Activated CD4-positive, alpha-beta memory T cell treated with anti-CD3 and anti-CD28 coated beads for 36 hours (primary cell): ENCODE measurements at regions of chr9 and their contacts with region 1.

Region 1: DNA sequence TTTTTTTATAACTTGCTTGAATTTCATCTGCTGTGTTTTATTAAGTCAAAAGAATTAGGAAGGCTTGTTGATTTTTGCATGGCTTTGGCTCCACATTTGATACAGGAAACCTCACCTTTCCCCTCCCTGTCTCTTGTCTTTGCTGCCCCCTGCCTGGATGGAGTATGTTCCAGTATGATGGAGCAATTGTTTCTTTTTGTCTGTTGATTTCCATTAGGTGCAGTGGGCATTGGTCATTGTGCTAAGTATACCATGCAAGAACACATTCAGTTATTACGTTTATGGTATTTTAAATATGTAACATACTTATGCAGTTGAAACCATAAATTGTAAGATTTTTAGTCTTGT is 19.6 kb downstream of the TJP2 start:
- DNase-seq: no peak
- H3K4me3 Mint-ChIP-seq: no peak overlapping the region
- H3K27ac Mint-ChIP-seq: no peak overlapping the region
- H3K4me1 Mint-ChIP-seq: peaks cover 8% of the 10 kb centered on the region
- H3K27me3 Mint-ChIP-seq: no peaks in the 10 kb centered on the region

Region 2: DNA sequence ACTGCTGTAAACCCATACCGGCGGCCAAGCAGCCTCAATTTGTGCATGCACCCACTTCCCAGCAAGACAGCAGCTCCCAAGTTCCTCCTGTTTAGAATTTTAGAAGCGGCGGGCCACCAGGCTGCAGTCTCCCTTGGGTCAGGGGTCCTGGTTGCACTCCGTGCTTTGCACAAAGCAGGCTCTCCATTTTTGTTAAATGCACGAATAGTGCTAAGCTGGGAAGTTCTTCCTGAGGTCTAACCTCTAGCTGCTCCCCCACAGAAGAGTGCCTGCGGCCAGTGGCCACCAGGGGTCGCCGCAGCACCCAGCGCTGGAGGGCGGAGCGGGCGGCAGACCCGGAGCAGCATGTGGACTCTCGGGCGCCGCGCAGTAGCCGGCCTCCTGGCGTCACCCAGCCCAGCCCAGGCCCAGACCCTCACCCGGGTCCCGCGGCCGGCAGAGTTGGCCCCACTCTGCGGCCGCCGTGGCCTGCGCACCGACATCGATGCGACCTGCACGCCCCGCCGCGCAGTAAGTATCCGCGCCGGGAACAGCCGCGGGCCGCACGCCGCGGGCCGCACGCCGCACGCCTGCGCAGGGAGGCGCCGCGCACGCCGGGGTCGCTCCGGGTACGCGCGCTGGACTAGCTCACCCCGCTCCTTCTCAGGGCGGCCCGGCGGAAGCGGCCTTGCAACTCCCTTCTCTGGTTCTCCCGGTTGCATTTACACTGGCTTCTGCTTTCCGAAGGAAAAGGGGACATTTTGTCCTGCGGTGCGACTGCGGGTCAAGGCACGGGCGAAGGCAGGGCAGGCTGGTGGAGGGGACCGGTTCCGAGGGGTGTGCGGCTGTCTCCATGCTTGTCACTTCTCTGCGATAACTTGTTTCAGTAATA is 158.0 kb before region 1 on chr9 and contains the start of gene FXN:
- CTCF ChIA-PET with region 1: interaction called, 37 read pairs
- POLR2A ChIA-PET with region 1: no interaction called
- intact Hi-C with region 1: loop called (anchors 1 kb)
- DNase-seq: peak; percentile 89
- H3K4me3 Mint-ChIP-seq: peak within 1 kb of the TSS; percentile 97
- H3K27ac Mint-ChIP-seq: peak within 1 kb of the TSS; percentile 92
- H3K4me1 Mint-ChIP-seq: peaks cover 21% of the 10 kb centered on the region
- H3K27me3 Mint-ChIP-seq: no peaks in the 10 kb centered on the region
- total RNA-seq, gene FXN: 14.1 to 15.2 TPM

Region 3: GRCh38 chr9:69056191-69056815 is 137.4 kb before region 1 on chr9:
- CTCF ChIA-PET with region 1: interaction called, 179 read pairs
- POLR2A ChIA-PET with region 1: interaction called, 3 read pairs
- intact Hi-C with region 1: loop called (anchors 1 kb)
- DNase-seq: no peak
- H3K4me3 Mint-ChIP-seq: no peak overlapping the region
- H3K27ac Mint-ChIP-seq: no peak overlapping the region
- H3K4me1 Mint-ChIP-seq: no peaks in the 10 kb centered on the region
- H3K27me3 Mint-ChIP-seq: no peaks in the 10 kb centered on the region

Region 4: DNA sequence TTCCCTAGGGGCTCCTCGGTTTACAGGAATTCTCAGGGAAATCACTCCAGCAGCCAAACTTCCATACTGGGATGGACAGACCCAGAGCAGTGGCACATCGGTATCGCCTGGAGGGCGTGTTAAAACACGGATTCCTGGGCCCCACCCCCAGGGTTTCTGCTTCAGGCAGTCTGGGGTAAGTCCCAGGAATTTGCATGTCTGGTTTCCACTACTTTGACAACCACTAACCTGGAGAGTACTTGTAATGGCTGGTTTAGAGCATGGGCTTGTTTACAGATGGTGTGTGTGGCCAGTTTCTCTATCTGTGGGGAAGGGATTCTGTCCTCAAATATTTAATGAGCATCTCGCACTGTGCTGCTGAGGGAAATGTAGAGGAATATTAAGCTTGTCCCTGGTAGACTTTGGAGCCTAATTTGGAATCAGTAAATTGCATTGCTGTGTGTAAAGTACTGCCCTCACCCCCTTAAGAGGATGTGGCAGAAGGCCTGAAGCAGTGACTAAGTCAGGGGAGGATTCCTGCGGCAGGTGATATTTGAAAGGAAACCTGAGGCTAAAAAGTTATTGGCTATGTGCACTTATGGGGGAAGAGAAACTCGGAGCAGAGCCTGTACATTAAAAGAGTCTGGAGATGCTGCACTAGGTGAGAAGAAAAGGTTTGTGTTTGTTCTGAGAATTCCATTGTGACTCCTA is 38.2 kb before region 1 on chr9:
- CTCF ChIA-PET with region 1: interaction called, 37 read pairs
- POLR2A ChIA-PET with region 1: no interaction called
- intact Hi-C with region 1: loop called (anchors 1 kb)
- DNase-seq: no peak
- H3K4me3 Mint-ChIP-seq: no peak overlapping the region
- H3K27ac Mint-ChIP-seq: no peak overlapping the region
- H3K4me1 Mint-ChIP-seq: no peaks in the 10 kb centered on the region
- H3K27me3 Mint-ChIP-seq: no peaks in the 10 kb centered on the region

Region 5: GRCh38 chr9:69174616-69175463 is 18.8 kb before region 1 on chr9:
- CTCF ChIA-PET with region 1: interaction called, 11 read pairs
- POLR2A ChIA-PET with region 1: no interaction called
- intact Hi-C with region 1: no loop called
- DNase-seq: peak; percentile 83
- H3K4me3 Mint-ChIP-seq: peak overlapping the region; percentile 82
- H3K27ac Mint-ChIP-seq: peak overlapping the region; percentile 71
- H3K4me1 Mint-ChIP-seq: peaks cover 54% of the 10 kb centered on the region
- H3K27me3 Mint-ChIP-seq: peaks cover 36% of the 10 kb centered on the region

Region 6: GRCh38 chr9:69331444-69331843 is 137.8 kb after region 1 on chr9:
- CTCF ChIA-PET with region 1: no interaction called
- POLR2A ChIA-PET with region 1: no interaction called
- intact Hi-C with region 1: no loop called
- DNase-seq: no peak
- H3K4me3 Mint-ChIP-seq: no peak overlapping the region
- H3K27ac Mint-ChIP-seq: no peak overlapping the region
- H3K4me1 Mint-ChIP-seq: no peaks in the 10 kb centered on the region
- H3K27me3 Mint-ChIP-seq: peaks cover 19% of the 10 kb centered on the region

Region 7: GRCh38 chr9:69357030-69357775 is 163.5 kb after region 1 on chr9:
- CTCF ChIA-PET with region 1: no interaction called
- POLR2A ChIA-PET with region 1: no interaction called
- intact Hi-C with region 1: no loop called
- DNase-seq: no peak
- H3K4me3 Mint-ChIP-seq: no peak overlapping the region
- H3K27ac Mint-ChIP-seq: no peak overlapping the region
- H3K4me1 Mint-ChIP-seq: no peaks in the 10 kb centered on the region
- H3K27me3 Mint-ChIP-seq: peaks cover 3% of the 10 kb centered on the region